ENCODE measurements at regions of chr19 and their contacts with region 1.

Region 1: GRCh38 chr19:11505032-11505503 is 571 bp downstream of the ZNF653 start:
- DNase-seq: peak; percentile 97
- ATAC-seq: peak; percentile 93
- H3K4me3 Mint-ChIP-seq: peak overlapping the region; percentile 92
- H3K27ac Mint-ChIP-seq: peak overlapping the region; percentile 95
- H3K4me1 Mint-ChIP-seq: peaks cover 18% of the 10 kb centered on the region
- H3K27me3 Mint-ChIP-seq: no peaks in the 10 kb centered on the region
- CTCF ChIP-seq: no peak

Region 2: DNA sequence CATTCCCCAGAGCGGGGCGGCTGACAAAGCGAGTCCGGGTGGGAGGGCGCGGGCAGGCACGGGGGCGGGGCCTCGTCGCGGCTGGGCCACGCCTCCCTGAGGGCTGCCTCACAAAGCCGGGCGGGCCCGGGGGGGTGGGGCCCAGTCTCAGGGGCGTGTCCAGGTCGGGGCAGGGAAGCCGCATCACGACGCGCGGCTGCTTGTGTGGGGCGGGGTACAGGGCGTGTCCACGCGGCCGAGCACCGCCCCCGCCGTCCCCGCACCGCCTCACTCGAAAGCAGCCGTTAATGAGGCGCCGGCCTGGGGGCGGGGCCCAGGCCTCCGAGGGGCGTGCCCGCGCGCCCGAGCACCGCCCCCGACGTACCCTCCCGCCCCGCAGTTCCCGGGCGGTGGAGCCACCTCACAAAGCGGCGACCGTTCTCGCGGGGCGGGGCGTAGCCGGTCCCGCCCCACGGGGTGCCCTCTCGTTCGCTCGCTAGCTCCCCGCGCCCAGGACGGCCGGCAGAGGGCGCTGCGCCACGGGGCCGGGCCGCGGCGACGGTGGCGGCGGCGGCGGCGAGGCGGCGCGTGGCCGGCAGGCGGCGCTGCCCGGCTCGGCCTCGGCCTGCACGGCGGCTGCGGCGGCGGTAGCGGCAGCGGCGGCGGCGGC is 634.0 kb before region 1 on chr19 and contains the start of gene CARM1:
- CTCF ChIA-PET with region 1: no interaction called
- POLR2A ChIA-PET with region 1: no interaction called
- intact Hi-C with region 1: loop called (anchors 2 kb)
- DNase-seq: peak; percentile 100
- ATAC-seq: peak; percentile 84
- H3K4me3 Mint-ChIP-seq: peak within 1 kb of the TSS; percentile 83
- H3K27ac Mint-ChIP-seq: peak within 1 kb of the TSS; percentile 88
- H3K4me1 Mint-ChIP-seq: peaks cover 44% of the 10 kb centered on the region
- H3K27me3 Mint-ChIP-seq: no peaks in the 10 kb centered on the region
- CTCF ChIP-seq: no peak
- total RNA-seq, gene CARM1: 32.3 and 39.1 TPM in 2 replicates

Region 3: DNA sequence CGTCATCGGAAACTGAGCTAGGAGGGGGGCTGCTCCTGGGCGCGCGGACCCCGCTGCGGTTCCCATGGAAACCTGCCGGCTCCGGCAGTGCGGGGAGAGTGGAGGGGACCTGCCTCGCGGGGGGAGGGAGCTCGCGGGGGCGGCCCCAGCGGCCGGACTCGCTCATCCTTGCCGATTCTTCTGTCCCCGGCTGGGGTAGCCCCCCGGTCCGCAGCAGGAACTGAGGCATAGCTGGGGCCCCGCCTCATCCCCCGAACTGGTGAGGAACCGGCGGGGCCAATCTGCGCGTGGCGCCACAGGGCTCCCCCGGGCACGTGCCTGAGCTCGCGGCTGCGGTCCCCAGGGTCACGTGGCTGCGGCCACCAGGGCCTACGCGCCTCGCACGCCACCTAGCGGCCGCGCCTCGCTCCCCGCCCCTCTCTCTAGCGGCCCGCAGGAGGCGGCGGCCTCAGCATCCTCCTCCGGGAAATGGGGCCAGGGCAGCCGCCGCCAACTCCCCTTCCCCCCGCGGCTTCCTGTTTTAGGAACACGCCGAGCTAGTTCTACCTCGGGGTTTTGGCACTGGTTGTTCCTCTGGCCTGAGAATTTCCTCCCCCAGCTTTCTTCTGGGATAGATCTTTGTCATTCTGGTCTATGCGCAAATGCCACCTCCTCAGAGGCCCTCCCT is 22.6 kb before region 1 on chr19:
- CTCF ChIA-PET with region 1: interaction called, 3 read pairs
- POLR2A ChIA-PET with region 1: no interaction called
- intact Hi-C with region 1: loop called (anchors 1 kb)
- DNase-seq: peak; percentile 85
- ATAC-seq: peak; percentile 72
- H3K4me3 Mint-ChIP-seq: peak overlapping the region; percentile 74
- H3K27ac Mint-ChIP-seq: peak overlapping the region; percentile 41
- H3K4me1 Mint-ChIP-seq: peaks cover 30% of the 10 kb centered on the region
- H3K27me3 Mint-ChIP-seq: peaks cover 23% of the 10 kb centered on the region
- CTCF ChIP-seq: no peak

Region 4: GRCh38 chr19:11494634-11495285 is 10.3 kb before region 1 on chr19:
- CTCF ChIA-PET with region 1: no interaction called
- POLR2A ChIA-PET with region 1: no interaction called
- intact Hi-C with region 1: no loop called
- DNase-seq: no peak
- ATAC-seq: no peak
- H3K4me3 Mint-ChIP-seq: no peak overlapping the region
- H3K27ac Mint-ChIP-seq: no peak overlapping the region
- H3K4me1 Mint-ChIP-seq: no peaks in the 10 kb centered on the region
- H3K27me3 Mint-ChIP-seq: no peaks in the 10 kb centered on the region
- CTCF ChIP-seq: no peak

Region 5: GRCh38 chr19:11535792-11536595 is 30.9 kb after region 1 on chr19:
- CTCF ChIA-PET with region 1: no interaction called
- POLR2A ChIA-PET with region 1: no interaction called
- intact Hi-C with region 1: loop called (anchors 2 kb)
- DNase-seq: peak; percentile 96
- ATAC-seq: peak; percentile 92
- H3K4me3 Mint-ChIP-seq: peak overlapping the region; percentile 68
- H3K27ac Mint-ChIP-seq: peak overlapping the region; percentile 67
- H3K4me1 Mint-ChIP-seq: peaks cover 23% of the 10 kb centered on the region
- H3K27me3 Mint-ChIP-seq: peaks cover 14% of the 10 kb centered on the region
- CTCF ChIP-seq: no peak

Region 6: GRCh38 chr19:11597202-11598102 is 92.4 kb after region 1 on chr19 and contains the start of gene ZNF627:
- CTCF ChIA-PET with region 1: no interaction called
- POLR2A ChIA-PET with region 1: interaction called, 3 read pairs
- intact Hi-C with region 1: loop called (anchors 1 kb)
- DNase-seq: peak; percentile 91
- ATAC-seq: peak; percentile 99
- H3K4me3 Mint-ChIP-seq: peak within 1 kb of the TSS; percentile 88
- H3K27ac Mint-ChIP-seq: peak within 1 kb of the TSS; percentile 87
- H3K4me1 Mint-ChIP-seq: peaks cover 47% of the 10 kb centered on the region
- H3K27me3 Mint-ChIP-seq: no peaks in the 10 kb centered on the region
- CTCF ChIP-seq: no peak
- total RNA-seq, gene ZNF627: 17.0 and 17.6 TPM in 2 replicates